Sigmoid colon (tissue), 7 donors: ENCODE measurements at regions of chr12 and their contacts with region 1.

Region 1: DNA sequence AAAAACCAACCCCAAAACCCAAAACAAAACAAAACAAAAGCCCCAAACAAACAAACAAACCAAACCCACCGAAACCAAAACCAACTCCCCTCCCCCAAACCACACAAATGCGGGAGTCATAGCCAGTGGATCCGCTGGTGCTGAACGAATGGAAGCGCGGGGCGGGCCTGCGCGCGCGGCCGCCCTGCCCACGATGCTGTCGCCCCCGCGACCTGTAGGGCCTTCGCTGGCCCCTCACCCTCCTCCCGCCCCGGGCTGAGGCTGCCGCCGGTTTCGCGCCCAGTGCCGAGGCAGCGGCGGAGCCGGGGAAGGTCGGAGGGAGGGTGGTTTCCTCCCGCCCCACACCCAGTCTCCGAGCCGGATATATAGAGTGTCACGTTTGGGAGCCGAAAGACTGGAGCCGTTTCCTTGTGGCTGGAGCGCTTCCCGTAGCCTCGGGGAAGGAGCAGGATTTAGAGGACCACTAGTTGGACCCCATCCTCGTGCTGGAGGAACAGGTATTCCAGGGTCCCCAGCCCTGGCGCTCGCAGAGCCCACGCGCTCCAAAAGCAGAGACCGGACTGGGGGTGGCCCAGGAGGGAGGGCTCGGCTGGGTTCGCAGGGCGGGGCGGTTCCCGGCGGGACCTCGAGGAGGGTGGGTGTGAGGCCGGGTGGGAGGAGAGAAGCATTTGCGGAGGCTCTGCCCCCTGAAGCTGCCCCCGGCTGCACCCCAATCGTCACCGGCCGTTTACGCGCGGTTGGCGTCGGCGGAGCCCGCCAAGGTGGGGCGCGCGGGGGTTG is at the start of gene FAR2:
- DNase-seq: peak; percentile 84
- H3K4me3 ChIP-seq: peak within 1 kb of the TSS; percentile 60 to 75 (median 66)
- H3K27ac ChIP-seq: peak within 1 kb of the TSS; percentile 77 to 83 (median 82)
- H3K4me1 ChIP-seq: peaks cover 0 to 30% (median 14%) of the 10 kb centered on the region in 4 donors
- H3K27me3 ChIP-seq: no peaks in the 10 kb centered on the region
- CTCF ChIP-seq: no peak
- EP300 ChIP-seq: no peak
- POLR2A ChIP-seq: no peak
- total RNA-seq, gene FAR2: 11.1 to 13.0 (median 11.9) TPM

Region 2: DNA sequence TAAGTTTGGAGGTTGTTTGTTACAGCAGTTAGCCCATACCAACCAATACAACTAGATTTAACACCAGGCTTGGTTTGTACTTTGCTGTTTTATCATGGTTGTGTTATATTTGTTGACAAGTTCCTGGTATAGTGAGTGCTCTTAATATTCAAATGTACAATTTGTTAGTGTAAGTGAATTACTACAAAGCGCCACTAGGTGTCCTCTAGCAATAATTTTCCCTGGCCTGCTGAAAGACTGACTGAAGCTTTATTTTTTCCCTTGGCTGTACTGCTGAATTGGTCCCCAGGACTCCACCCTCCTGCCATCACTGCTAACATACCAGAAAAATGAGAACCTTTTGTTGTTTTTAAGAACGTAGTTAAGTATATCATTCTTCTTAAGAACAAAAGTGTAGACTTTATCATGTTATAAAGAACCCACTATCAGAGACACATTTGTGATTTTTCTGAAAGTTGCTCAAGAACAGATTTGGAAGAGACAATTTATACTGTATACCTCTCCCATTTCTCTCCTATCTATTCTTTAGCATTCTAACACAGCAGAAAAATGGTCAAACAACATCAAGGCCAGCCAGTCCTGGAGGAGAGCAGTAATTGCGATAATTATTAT is 75.4 kb before region 1 on chr12:
- intact Hi-C with region 1: loop called (anchors 10 kb)
- DNase-seq: no peak
- H3K4me3 ChIP-seq: no peak overlapping the region
- H3K27ac ChIP-seq: no peak overlapping the region
- H3K4me1 ChIP-seq: no peaks in the 10 kb centered on the region
- H3K27me3 ChIP-seq: no peaks in the 10 kb centered on the region
- CTCF ChIP-seq: peak; percentile 30 to 73 (median 59)
- EP300 ChIP-seq: no peak
- POLR2A ChIP-seq: no peak

Region 3: GRCh38 chr12:29317556-29318363 is 168.7 kb after region 1 on chr12:
- intact Hi-C with region 1: loop called (anchors 5 kb)
- DNase-seq: no peak
- H3K4me3 ChIP-seq: no peak overlapping the region
- H3K27ac ChIP-seq: no peak overlapping the region
- H3K4me1 ChIP-seq: peaks cover 0 to 11% (median 3%) of the 10 kb centered on the region in 4 donors
- H3K27me3 ChIP-seq: no peaks in the 10 kb centered on the region
- CTCF ChIP-seq: peak; percentile 43 to 66 (median 48)
- EP300 ChIP-seq: no peak
- POLR2A ChIP-seq: no peak

Region 4: DNA sequence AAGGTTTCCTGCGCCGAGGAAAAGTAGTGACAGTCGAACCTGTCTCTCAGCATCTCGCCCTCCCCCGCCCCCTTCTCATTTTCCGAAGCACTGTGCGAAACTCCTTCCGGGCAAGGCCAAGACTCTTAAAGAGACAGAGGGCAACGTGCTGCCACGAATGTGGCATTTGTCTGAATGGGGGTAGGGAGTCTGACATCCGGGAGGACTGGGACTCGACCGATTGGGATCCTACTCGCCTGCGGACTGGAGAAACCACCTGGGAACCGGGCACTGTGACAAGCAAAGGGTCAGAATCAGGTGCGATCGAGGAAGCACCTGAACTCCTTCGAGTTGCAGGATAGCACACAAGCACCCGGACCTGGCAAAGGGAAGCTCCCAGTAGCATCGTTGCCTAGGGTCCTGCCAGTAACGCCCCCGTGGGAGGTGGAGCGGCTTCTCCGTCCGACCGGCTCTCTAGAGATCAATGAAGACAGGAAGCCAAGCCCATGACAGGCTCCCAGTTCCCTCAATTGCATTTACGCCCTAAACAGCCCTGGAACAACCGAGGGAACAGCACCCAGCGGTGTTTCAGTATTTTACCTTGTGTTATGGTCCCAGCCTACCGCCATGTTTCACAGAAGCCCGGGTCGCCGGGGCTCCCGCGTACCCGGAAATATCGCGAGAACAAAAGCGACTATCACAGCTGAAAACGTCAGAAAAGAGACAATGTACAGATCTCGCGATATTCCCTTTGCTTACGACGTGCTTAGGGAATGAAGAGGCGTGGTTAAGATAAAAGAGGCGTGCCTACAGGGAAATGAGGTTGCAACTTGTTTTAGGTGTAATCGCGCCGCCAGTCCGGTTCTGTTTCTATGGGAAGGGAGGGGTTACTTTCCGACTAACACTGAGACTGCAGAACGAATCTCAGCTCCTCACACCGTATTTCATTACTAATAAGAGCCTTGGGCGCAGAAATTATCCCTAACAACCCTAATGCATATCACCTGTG is 231.7 kb after region 1 on chr12 and contains the start of gene ERGIC2:
- intact Hi-C with region 1: loop called (anchors 10 kb)
- DNase-seq: peak; percentile 95
- H3K4me3 ChIP-seq: peak within 1 kb of the TSS; percentile 72 to 98 (median 90)
- H3K27ac ChIP-seq: peak within 1 kb of the TSS; percentile 78 to 89 (median 84)
- H3K4me1 ChIP-seq: peaks cover 0 to 14% (median 13%) of the 10 kb centered on the region in 4 donors
- H3K27me3 ChIP-seq: no peaks in the 10 kb centered on the region
- CTCF ChIP-seq: no peak
- EP300 ChIP-seq: no peak
- POLR2A ChIP-seq: no peak
- total RNA-seq, gene ERGIC2: 62.3 to 81.7 (median 63.5) TPM